Right ventricle myocardium inferior (tissue), 1 donor: ENCODE measurements at regions of chr4 and their contacts with region 1.

Region 1: GRCh38 chr4:74228691-74229640 is 71.0 kb downstream of the MTHFD2L start:
- DNase-seq: no peak
- ATAC-seq: no peak

Region 2: DNA sequence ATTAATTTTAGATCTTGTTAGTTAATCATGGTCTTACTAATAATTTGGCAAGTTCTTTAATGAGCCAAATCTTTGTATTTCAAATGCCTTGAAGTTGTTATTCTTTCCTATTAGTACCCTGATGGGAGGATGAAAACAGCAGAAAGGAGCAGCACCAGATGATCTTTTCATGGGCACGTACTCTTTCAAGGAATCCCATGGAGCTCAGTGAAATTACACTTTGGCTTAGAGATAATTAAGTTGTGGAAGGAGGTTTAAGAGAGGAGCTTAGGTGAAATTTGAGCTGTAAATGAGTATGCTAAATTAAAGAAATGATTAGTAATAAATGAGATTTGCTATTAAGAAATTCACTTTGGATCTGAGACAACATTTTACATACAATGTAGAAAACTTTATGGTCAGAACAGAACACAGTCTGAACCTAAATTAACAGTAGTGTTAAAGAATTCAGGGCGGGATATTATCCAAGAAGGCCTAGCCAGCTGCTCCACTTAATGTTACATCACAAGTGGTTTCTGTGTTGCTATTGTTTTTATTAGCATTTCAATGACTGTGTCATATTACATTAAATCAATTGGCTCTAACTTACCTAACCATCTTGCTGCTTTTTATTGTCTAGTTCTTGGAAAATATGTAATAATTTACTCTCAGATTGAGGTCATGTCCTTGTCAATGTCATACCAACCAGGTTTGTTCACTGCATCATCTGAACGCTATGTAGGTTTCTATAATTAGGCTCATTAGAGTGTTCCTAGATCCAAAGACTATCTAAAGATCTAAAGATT is 67.1 kb before region 1 on chr4:
- intact Hi-C with region 1: no loop called
- DNase-seq: no peak
- ATAC-seq: no peak

Region 3: GRCh38 chr4:74675673-74676279 is 446.8 kb after region 1 on chr4:
- intact Hi-C with region 1: loop called (anchors 5 kb)
- DNase-seq: no peak
- ATAC-seq: no peak